ENCODE measurements at regions of chr5 and their contacts with region 1.

Region 1: DNA sequence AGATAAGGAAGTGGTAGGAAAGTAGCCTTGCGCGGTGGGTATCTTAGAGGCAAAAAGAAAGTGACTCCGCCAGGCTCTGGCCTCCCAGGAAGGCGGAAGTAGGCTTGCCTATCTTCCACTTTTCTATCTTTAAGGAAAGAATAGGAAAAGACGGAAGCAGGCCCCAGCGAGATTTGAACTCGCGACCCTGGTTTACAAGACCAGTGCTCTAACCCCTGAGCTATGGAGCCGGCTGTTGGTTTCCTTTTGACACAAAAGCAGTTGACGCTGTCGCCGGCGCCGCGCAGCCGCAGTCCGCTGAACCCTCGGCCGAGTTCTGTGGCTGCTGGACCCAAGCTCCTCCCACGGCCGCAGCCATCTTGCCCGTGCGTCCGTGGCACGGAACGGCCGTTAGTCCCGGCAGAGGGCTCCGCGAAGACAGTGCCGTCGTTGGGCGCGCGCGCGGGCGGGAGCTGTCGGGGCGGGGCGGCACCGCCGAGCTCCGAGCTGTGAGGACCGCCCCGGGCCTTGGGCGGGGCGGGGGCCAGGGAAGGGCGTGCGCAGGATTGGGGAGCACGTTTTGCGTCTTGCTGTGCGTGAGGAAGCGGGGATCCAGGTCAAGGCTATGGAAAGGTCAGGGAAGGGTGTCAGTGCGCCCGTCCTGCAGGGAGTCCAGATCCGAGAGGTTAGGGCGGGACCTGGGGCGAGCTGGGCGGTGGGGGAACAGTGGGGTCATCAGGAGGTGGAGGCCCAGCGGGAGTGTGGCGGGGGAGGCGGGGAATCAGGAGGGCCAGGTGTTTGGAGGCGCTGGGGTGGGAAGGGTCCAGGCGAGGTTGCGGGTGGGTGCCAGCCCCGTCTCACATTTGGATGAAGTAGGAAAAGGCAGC is 13.2 kb downstream of the TRIM7 start:
- DNase-seq: peak; percentile 95 to 98 (median 98)
- ATAC-seq: peak; percentile 84 to 89
- H3K4me3 ChIP-seq: peak overlapping the region; percentile 76
- H3K27ac ChIP-seq: peak overlapping the region; percentile 96
- H3K4me1 ChIP-seq: peaks cover 7% of the 10 kb centered on the region
- H3K27me3 ChIP-seq: no peaks in the 10 kb centered on the region

Region 2: DNA sequence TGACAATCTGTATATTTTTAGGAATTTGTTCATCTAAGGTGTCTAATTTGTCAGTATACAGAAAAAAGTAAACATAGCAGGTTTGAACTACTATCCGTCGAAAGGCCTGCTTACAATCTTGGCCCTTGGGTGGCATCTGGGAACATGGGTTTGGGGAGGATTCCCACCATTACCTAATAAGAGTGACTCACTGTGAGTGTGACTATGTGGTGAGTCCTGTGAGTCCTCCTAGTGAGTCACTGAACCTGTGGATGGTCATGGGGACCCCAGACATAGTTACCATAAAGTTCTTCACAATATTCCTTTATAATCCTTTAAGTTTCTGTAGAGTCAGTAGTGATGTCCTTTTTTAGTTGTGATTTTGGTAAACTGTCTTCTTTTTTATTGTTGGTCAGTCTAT is 1157.2 kb before region 1 on chr5:
- intact Hi-C with region 1: no loop called
- DNase-seq: no peak
- ATAC-seq: no peak
- H3K4me3 ChIP-seq: no peak overlapping the region
- H3K27ac ChIP-seq: no peak overlapping the region
- H3K4me1 ChIP-seq: no peaks in the 10 kb centered on the region
- H3K27me3 ChIP-seq: no peaks in the 10 kb centered on the region

Region 3: GRCh38 chr5:181028032-181028819 is 163.5 kb before region 1 on chr5:
- intact Hi-C with region 1: no loop called
- DNase-seq: no peak
- ATAC-seq: no peak
- H3K4me3 ChIP-seq: no peak overlapping the region
- H3K27ac ChIP-seq: no peak overlapping the region
- H3K4me1 ChIP-seq: no peaks in the 10 kb centered on the region
- H3K27me3 ChIP-seq: no peaks in the 10 kb centered on the region

Region 4: DNA sequence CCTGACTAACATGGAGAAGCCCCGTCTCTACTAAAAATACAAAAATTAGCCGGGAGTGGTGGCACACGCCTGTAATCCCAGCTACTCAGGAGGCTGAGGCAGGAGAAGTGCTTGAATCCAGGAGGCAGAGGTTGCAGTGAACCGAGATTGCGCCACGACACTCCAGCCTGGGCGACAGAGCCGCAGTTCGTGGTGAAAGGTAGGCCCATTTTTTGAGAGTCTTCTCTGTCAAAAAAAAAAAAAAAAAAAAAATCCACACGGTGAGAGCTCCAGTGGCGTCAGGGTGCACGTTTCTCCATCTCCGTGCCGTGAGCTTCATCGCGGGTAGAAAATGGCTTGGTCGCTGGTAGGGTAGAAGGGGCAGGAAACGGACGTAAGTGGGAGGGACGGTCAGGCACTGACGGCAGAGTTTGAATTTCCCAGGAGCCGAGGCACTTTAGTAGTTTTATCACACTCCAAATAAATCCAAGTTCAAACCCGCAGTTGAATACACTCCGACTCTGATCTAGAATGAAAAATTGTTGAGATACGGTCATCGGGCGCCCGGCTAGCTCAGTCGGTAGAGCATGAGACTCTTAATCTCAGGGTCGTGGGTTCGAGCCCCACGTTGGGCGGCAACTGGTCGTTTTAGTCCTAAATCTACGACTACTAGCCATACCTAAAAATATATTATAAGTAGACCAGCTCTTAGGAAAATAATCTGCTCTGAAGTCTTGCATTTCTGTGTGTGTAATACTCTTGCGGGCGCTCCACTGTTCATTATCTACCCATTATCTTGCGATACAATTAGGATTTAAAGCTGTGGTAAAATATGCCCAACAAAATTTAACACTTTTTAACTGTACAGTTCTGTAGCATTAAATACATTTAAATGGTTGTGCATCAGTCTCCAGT is 15.7 kb after region 1 on chr5:
- intact Hi-C with region 1: loop called in 2 of 4 experiments (anchors 2 kb)
- DNase-seq: peak; percentile 79 to 90 (median 85)
- ATAC-seq: peak; percentile 50 to 67
- H3K4me3 ChIP-seq: peak overlapping the region; percentile 70
- H3K27ac ChIP-seq: peak overlapping the region; percentile 90
- H3K4me1 ChIP-seq: peaks cover 4% of the 10 kb centered on the region
- H3K27me3 ChIP-seq: no peaks in the 10 kb centered on the region

Region 5: DNA sequence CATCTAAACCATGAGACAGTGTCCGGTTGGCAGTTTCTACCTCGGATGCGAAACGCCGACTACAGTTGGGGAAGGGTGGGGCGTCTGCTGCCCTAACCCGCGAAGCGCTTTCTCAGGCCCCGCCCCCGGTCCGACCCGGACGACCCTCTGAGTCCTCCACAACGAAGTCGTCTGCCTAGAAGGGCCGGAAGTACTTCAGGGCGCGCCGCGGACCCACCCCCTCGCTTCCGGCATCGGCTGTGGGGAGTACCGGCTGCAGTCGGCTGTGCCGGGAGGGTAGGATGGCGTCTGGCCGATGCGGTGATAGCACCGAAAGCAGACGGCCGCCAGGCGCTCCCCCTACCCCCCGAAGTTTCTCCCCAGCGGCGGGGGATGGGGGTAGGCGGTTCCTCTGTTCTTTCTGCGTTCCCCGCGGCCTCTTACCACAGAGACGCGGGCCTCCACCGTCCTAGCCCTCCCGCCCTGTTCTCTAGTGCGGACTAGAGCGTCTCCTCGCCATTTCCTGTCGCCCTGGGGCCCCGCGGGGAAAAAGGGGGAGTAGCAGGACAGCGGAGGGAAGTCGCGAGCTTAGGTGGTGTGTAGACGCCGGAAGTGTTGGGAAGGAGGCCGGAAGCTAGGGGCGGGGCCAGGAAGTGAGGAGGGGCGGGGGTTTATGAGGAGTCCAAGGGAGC is 31.4 kb after region 1 on chr5 and contains the start of gene TRIM41:
- intact Hi-C with region 1: loop called in 2 of 4 experiments (anchors 5 kb)
- DNase-seq: peak; percentile 100
- ATAC-seq: peak; percentile 91 to 93
- H3K4me3 ChIP-seq: peak within 1 kb of the TSS; percentile 67
- H3K27ac ChIP-seq: peak within 1 kb of the TSS; percentile 95
- H3K4me1 ChIP-seq: peaks cover 4% of the 10 kb centered on the region
- H3K27me3 ChIP-seq: no peaks in the 10 kb centered on the region
- total RNA-seq, gene TRIM41: 18.6 to 21.2 (median 21.0) TPM

Region 6: DNA sequence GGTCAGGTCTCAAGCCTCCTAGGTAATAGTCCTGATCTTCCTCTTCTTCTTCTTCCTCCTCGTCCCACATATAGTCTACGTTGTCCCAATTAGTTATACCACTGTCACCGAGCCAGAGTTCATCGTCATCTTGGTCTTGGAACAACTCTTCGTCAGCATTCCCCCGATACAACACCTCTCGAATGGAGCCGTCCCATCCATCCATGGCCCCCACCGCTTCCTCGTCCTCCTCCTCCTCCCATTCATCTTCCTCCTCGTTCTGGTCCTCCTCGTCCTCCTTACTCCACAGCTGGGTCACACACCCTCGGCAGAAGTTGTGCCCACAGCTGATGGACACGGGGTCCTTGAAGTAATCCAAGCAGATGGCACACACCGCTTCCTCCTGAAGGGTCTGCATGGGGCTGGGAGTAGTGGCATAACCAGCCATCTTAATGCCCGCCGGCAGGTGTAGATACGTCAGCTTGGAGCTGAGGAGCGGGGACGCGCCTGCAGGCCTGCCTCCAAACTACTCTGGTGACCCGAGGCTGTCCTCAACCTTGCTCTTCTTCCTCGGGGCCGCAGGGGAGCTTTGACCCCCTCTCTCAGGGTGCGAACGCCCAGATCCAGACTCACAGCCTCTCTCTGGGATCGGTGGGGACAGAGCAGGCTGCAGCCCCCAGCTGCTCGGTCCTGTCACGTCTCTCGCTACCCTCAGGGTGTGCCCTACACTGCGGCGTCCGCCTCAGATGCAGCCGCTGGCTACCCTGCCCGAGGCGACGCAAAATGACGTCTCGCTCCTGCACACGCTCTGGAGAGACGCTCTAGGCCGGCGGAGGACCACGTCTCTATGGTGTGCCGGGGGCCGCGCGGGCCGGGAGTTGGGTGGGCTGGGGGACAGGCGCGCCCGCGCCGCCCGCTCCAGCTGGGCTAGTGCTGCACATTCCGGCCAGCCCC is 68.9 kb after region 1 on chr5 and contains the start of gene TRIM52:
- intact Hi-C with region 1: loop called in 1 of 4 experiments (anchors 2 kb)
- DNase-seq: peak; percentile 94 to 98 (median 97)
- ATAC-seq: peak; percentile 95
- H3K4me3 ChIP-seq: peak within 1 kb of the TSS; percentile 89
- H3K27ac ChIP-seq: peak within 1 kb of the TSS; percentile 94
- H3K4me1 ChIP-seq: no peaks in the 10 kb centered on the region
- H3K27me3 ChIP-seq: no peaks in the 10 kb centered on the region
- total RNA-seq, gene TRIM52: 8.2 to 11.6 (median 10.6) TPM